ENCODE measurements at regions of chr6 and their contacts with region 1.

Region 1: DNA sequence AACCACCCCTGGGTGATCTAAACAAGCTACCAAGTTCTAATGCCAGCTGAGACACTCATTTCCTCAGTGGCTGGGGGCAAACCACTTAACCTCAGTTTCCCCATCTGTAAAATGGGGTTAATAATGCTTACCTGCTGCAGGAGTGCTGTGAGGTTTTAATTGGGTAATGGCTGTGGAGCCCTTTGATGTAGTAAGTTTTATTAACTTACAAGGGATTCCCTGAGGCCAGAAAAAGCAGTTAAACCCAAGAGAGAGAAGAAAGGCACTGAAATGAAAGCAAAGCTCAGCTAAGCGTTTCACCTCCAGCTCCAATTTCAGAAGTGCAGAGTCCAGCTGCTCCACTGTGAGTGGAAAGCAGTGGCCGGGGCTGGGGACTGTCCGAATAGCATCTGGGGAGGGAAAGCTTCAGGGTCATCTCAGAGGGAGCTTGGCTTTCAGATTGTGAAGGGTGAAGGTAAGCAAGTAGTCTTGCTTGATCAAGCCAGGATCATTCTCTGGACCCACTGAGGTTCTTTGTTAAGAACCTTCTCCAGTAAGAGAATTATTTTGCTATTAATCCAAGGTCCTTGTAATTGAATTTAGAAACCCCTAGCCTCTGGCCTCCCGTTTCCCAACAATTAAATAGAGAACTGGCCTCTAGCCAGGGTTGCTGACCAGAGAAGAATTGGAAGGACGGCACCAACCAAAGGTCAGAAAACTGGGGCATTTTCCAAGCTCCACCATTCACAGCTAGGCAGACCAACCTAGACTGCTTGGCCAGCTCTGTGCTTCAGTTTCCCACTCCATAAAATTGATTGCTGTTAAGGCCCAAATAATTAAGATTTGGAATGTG is 20.9 kb upstream of the TCP11 start:
- DNase-seq: no peak
- H3K4me3 Mint-ChIP-seq: no peak overlapping the region
- H3K27ac Mint-ChIP-seq: no peak overlapping the region
- H3K4me1 Mint-ChIP-seq: no peaks in the 10 kb centered on the region
- H3K27me3 Mint-ChIP-seq: peaks cover 27% of the 10 kb centered on the region

Region 2: DNA sequence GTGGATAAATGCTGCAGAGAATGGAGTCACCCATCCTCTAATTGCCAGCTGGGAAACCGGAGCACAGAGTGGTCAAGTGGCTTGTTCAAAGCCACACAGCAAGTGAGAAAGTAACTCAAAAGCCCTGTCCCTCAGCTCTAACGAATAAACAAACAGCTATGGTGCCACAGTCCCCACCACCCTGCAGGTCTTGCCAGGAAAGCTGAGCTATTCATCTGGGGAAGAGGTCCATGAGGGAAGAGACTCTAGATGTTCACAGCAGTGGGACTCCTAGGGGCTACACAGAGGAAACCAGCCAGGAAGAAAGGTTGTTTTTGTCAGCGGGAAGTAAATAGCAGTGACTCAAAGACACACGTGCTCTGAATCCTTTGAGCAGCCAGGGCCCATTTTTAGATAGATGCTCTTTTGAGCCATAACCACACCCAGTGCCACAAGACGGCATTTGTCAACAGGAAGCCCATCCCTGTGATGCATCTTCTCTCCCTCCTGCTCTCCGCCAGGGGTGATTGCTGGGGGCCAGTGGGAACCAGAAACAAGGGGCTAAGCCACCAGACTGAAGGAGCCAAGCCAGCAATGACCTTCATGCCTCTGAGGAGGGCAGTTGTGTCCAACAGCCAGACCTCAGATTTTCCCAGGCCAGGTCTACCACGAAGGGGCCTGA is 11.6 kb after region 1 on chr6:
- CTCF ChIA-PET with region 1: interaction called, 3 read pairs
- POLR2A ChIA-PET with region 1: interaction called, 10 read pairs
- DNase-seq: peak; percentile 49
- H3K4me3 Mint-ChIP-seq: no peak overlapping the region
- H3K27ac Mint-ChIP-seq: peak overlapping the region; percentile 75
- H3K4me1 Mint-ChIP-seq: peaks cover 19% of the 10 kb centered on the region
- H3K27me3 Mint-ChIP-seq: peaks cover 8% of the 10 kb centered on the region

Region 3: GRCh38 chr6:35850208-35850607 is 688.2 kb after region 1 on chr6:
- CTCF ChIA-PET with region 1: no interaction called
- POLR2A ChIA-PET with region 1: no interaction called
- DNase-seq: no peak
- H3K4me3 Mint-ChIP-seq: no peak overlapping the region
- H3K27ac Mint-ChIP-seq: no peak overlapping the region
- H3K4me1 Mint-ChIP-seq: no peaks in the 10 kb centered on the region
- H3K27me3 Mint-ChIP-seq: no peaks in the 10 kb centered on the region